ENCODE measurements at regions of chr18 and their contacts with region 1.

Region 1: GRCh38 chr18:3585656-3586509 is 135.9 kb downstream of the TGIF1 start:
- DNase-seq: peak; percentile 81
- H3K4me3 ChIP-seq: no peak overlapping the region
- H3K27ac ChIP-seq: no peak overlapping the region
- H3K4me1 ChIP-seq: peaks cover 2% of the 10 kb centered on the region
- H3K27me3 ChIP-seq: no peaks in the 10 kb centered on the region
- CTCF ChIP-seq: peak; percentile 75 to 78
- POLR2A ChIP-seq: no peak

Region 2: DNA sequence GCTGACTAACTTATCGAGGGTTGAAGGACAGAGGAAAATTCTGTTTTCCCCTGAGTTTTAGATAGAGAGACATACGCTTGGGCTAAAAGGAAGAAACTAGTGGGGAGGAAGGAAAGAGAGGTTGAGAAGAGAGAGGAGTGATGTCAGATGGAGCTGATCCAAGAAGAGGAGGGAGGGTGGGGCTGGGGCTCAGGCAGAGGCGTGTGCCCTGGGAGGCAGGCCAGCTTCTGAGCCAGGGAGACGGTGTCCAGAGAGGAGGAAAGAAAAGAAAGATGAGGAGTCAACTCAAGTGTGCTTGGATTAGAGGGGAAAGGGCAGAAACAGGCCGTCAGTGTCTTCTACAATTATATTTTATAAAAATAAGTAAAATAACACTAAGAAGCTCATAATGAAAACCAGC is 682.9 kb before region 1 on chr18:
- CTCF ChIA-PET with region 1: no interaction called
- POLR2A ChIA-PET with region 1: no interaction called
- dilution Hi-C with region 1: no loop called
- intact Hi-C with region 1: no loop called
- DNase-seq: peak; percentile 19
- H3K4me3 ChIP-seq: no peak overlapping the region
- H3K27ac ChIP-seq: no peak overlapping the region
- H3K4me1 ChIP-seq: peaks cover 13% of the 10 kb centered on the region
- H3K27me3 ChIP-seq: no peaks in the 10 kb centered on the region
- CTCF ChIP-seq: no peak
- POLR2A ChIP-seq: no peak

Region 3: GRCh38 chr18:3297025-3297984 is 288.6 kb before region 1 on chr18:
- CTCF ChIA-PET with region 1: interaction called, 10 read pairs
- POLR2A ChIA-PET with region 1: no interaction called
- dilution Hi-C with region 1: no loop called
- intact Hi-C with region 1: no loop called
- DNase-seq: peak; percentile 57
- H3K4me3 ChIP-seq: peak overlapping the region in 2 of 3 experiments; percentile 53 to 54
- H3K27ac ChIP-seq: no peak overlapping the region
- H3K4me1 ChIP-seq: no peaks in the 10 kb centered on the region
- H3K27me3 ChIP-seq: peaks cover 0 to 10% of the 10 kb centered on the region in 2 experiments
- CTCF ChIP-seq: peak; percentile 64 to 67
- POLR2A ChIP-seq: no peak

Region 4: GRCh38 chr18:3466045-3466444 is 119.8 kb before region 1 on chr18:
- CTCF ChIA-PET with region 1: interaction called, 42 read pairs
- POLR2A ChIA-PET with region 1: no interaction called
- dilution Hi-C with region 1: no loop called
- intact Hi-C with region 1: no loop called
- DNase-seq: peak; percentile 92
- H3K4me3 ChIP-seq: peak overlapping the region in 1 of 3 experiments; percentile 47
- H3K27ac ChIP-seq: peak overlapping the region; percentile 92
- H3K4me1 ChIP-seq: peaks cover 36% of the 10 kb centered on the region
- H3K27me3 ChIP-seq: no peaks in the 10 kb centered on the region
- CTCF ChIP-seq: no peak
- POLR2A ChIP-seq: no peak

Region 5: GRCh38 chr18:3572761-3573160 is 13.1 kb before region 1 on chr18:
- CTCF ChIA-PET with region 1: interaction called, 10 read pairs
- POLR2A ChIA-PET with region 1: no interaction called
- dilution Hi-C with region 1: no loop called
- intact Hi-C with region 1: no loop called
- DNase-seq: no peak
- H3K4me3 ChIP-seq: no peak overlapping the region
- H3K27ac ChIP-seq: no peak overlapping the region
- H3K4me1 ChIP-seq: no peaks in the 10 kb centered on the region
- H3K27me3 ChIP-seq: no peaks in the 10 kb centered on the region
- CTCF ChIP-seq: no peak
- POLR2A ChIP-seq: no peak

Region 6: GRCh38 chr18:3799176-3799914 is 213.5 kb after region 1 on chr18:
- CTCF ChIA-PET with region 1: no interaction called
- POLR2A ChIA-PET with region 1: no interaction called
- dilution Hi-C with region 1: no loop called
- intact Hi-C with region 1: no loop called
- DNase-seq: no peak
- H3K4me3 ChIP-seq: no peak overlapping the region
- H3K27ac ChIP-seq: no peak overlapping the region
- H3K4me1 ChIP-seq: peaks cover 11% of the 10 kb centered on the region
- H3K27me3 ChIP-seq: no peaks in the 10 kb centered on the region
- CTCF ChIP-seq: no peak
- POLR2A ChIP-seq: no peak

Measured in endothelial cell of umbilical vein (primary cell).